CD4-positive, alpha-beta T cell (primary cell): ENCODE measurements at regions of chr13 and their contacts with region 1.

Region 1: DNA sequence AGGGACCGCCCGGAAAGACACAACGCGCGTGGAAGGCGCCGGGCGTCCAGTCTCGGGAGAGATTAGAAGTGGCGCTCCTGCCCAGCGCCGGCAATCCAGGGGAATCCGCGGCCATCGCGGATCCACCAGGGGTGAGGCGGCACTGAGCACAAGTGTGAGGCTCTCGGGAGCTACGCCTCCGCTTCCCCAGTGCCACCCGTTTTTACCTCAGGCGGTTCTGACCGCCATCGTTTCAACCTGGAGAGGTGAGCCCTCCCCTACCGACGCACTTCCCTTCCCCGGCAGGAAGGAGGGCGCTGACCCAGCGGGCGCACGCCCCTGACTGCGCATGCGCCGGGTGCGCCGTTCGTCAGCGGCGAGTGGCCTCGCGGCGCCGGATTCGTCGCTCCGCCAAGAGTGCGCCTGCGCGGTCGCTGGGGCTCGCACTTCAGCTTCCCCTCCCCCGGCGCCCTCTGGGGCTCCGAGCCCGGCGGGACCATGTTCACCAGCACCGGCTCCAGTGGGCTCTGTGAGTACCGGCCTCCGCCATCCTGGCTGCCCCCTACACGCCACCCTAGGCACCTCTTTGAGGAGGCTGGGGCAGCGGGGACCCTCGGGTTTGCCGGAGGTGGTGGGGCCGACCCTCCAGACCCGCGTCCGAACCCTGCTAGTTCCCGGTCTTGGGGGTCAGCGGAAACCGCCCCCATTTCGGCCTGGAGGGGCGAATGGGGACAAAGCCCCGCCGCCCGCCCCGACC is at the start of gene UBAC2:
- DNase-seq: peak; percentile 90 to 100 (median 97)
- ATAC-seq: peak; percentile 79
- H3K4me3 ChIP-seq: peak within 1 kb of the TSS; percentile 99
- H3K4me3 Mint-ChIP-seq: peak within 1 kb of the TSS; percentile 95
- H3K27ac ChIP-seq: peak within 1 kb of the TSS; percentile 97 to 99
- H3K27ac Mint-ChIP-seq: peak within 1 kb of the TSS; percentile 93
- H3K4me1 ChIP-seq: peaks cover 36% of the 10 kb centered on the region
- H3K4me1 Mint-ChIP-seq: peaks cover 67% of the 10 kb centered on the region
- H3K27me3 ChIP-seq: no peaks in the 10 kb centered on the region
- H3K27me3 Mint-ChIP-seq: no peaks in the 10 kb centered on the region
- CTCF ChIP-seq: no peak
- total RNA-seq, gene UBAC2: 59.8 to 67.4 TPM

Region 2: GRCh38 chr13:99214232-99214631 is 13.6 kb after region 1 on chr13:
- CTCF ChIA-PET with region 1: interaction called, 15 read pairs
- POLR2A ChIA-PET with region 1: interaction called, 259 read pairs
- intact Hi-C with region 1: loop called (anchors 1 to 2 kb)
- DNase-seq: peak in 7 of 14 experiments; percentile 20 to 54 (median 35)
- ATAC-seq: peak; percentile 23
- H3K4me3 ChIP-seq: peak overlapping the region; percentile 27
- H3K4me3 Mint-ChIP-seq: peak overlapping the region; percentile 91
- H3K27ac ChIP-seq: peak overlapping the region; percentile 39 to 77
- H3K27ac Mint-ChIP-seq: peak overlapping the region; percentile 100
- H3K4me1 ChIP-seq: peaks cover 66% of the 10 kb centered on the region
- H3K4me1 Mint-ChIP-seq: peaks cover 83% of the 10 kb centered on the region
- H3K27me3 ChIP-seq: no peaks in the 10 kb centered on the region
- H3K27me3 Mint-ChIP-seq: no peaks in the 10 kb centered on the region
- CTCF ChIP-seq: no peak

Region 3: DNA sequence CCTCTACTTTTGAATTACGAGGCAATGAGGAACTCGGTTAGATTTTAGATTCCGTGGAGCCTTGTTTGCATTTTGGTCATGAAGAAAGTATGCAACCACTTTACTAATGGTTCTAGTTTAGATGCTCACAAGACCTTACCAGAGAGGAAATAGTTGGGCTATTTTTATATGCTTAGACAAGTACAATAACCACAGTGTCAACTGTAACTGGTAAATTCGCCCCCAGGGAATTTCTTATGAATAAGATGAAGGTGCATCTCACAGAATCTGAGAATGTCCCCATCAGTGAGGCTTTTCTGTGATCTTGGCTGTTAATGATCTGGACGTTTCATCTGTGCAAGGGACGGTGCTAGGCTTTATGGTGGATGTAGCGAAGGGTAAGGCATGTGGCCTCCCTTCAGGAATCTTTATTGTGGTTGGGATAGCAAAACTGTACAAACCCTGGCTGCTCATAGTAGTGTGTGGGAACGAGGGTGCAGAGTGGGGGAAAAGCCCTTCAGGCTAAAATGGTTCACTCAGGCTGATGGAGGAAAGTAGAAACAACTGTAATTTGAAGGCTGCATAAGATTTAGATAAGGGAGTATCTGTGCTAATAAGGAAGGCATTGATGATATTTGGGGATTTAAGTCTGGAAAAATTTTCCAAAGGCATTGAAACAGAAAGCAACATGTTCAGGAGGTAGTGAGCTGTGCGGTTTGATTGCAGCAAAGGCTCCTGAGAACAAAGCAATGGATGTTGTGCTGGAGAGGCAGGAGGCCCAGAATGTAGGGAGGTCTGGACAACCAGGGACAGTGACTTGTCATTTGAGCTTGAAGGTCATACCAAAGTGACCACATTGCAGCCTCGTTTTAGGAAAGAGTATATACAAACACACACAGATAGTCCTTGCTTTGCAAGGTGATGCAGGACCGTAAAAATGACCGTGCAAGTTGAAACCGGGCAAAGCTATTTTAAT is 28.4 kb after region 1 on chr13:
- CTCF ChIA-PET with region 1: interaction called, 9 read pairs
- POLR2A ChIA-PET with region 1: interaction called, 14 read pairs
- intact Hi-C with region 1: loop called in 1 of 2 experiments (anchors 2 kb)
- DNase-seq: peak in 3 of 14 experiments; percentile 48 to 52 (median 48)
- ATAC-seq: peak; percentile 30
- H3K4me3 ChIP-seq: peak overlapping the region; percentile 2
- H3K4me3 Mint-ChIP-seq: peak overlapping the region; percentile 69
- H3K27ac ChIP-seq: peak overlapping the region; percentile 31 to 45
- H3K27ac Mint-ChIP-seq: peak overlapping the region; percentile 75
- H3K4me1 ChIP-seq: peaks cover 74% of the 10 kb centered on the region
- H3K4me1 Mint-ChIP-seq: peaks cover 83% of the 10 kb centered on the region
- H3K27me3 ChIP-seq: no peaks in the 10 kb centered on the region
- H3K27me3 Mint-ChIP-seq: no peaks in the 10 kb centered on the region
- CTCF ChIP-seq: no peak

Region 4: DNA sequence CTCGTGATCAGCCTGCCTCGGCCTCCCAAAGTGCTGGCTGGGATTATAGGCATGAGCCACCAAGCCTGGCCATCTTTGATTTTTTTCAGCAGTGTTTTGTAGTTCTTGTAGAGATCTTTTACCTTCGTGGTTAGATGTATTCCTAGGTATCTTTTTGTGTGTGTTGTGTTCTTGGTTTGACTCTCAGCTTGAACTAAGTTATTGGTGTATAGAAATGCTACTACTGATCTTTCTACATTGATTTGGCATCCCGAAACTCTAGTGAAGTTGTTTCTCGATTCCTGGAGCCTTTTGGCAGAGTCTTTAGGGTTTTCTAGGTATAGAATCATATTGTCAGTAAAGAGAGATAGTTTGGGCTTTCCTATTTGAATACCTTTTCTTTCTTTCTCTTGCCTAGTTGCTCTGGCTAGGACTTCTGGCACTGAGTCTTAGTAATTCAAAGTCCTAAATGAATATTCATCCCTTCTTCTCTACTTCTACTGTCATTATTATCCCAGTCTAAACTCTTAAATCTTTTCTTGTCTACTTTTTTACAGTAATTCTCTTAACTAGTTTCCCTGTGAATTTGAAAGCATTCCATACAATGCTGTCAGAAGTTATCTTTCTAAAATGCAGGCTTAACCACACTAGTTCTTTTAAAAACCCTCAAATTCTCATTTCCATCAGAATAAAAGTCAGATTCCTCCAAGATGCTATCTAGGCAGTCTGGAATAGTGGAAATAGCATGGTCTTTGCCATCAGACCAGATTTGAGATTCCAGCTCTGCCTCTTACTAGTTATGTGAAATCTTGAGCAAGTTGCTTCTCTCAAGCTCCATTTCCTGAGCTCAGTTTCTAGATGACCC is 50.6 kb after region 1 on chr13:
- CTCF ChIA-PET with region 1: interaction called, 21 read pairs
- POLR2A ChIA-PET with region 1: interaction called, 186 read pairs
- intact Hi-C with region 1: no loop called
- DNase-seq: no peak
- ATAC-seq: no peak
- H3K4me3 ChIP-seq: no peak overlapping the region
- H3K4me3 Mint-ChIP-seq: no peak overlapping the region
- H3K27ac ChIP-seq: no peak overlapping the region
- H3K27ac Mint-ChIP-seq: peak overlapping the region; percentile 43
- H3K4me1 ChIP-seq: peaks cover 14% of the 10 kb centered on the region
- H3K4me1 Mint-ChIP-seq: peaks cover 68% of the 10 kb centered on the region
- H3K27me3 ChIP-seq: no peaks in the 10 kb centered on the region
- H3K27me3 Mint-ChIP-seq: no peaks in the 10 kb centered on the region
- CTCF ChIP-seq: no peak

Region 5: GRCh38 chr13:99606324-99607066 is 405.9 kb after region 1 on chr13:
- CTCF ChIA-PET with region 1: no interaction called
- POLR2A ChIA-PET with region 1: interaction called, 3 read pairs
- intact Hi-C with region 1: loop called in 1 of 2 experiments (anchors 10 kb)
- DNase-seq: peak; percentile 85 to 97 (median 92)
- ATAC-seq: peak; percentile 88
- H3K4me3 ChIP-seq: peak within 1 kb of the TSS; percentile 73
- H3K4me3 Mint-ChIP-seq: peak within 1 kb of the TSS; percentile 96
- H3K27ac ChIP-seq: peak within 1 kb of the TSS; percentile 37 to 83
- H3K27ac Mint-ChIP-seq: peak within 1 kb of the TSS; percentile 91
- H3K4me1 ChIP-seq: peaks cover 32% of the 10 kb centered on the region
- H3K4me1 Mint-ChIP-seq: peaks cover 62% of the 10 kb centered on the region
- H3K27me3 ChIP-seq: no peaks in the 10 kb centered on the region
- H3K27me3 Mint-ChIP-seq: no peaks in the 10 kb centered on the region
- CTCF ChIP-seq: peak; percentile 4